Activated CD8-positive, alpha-beta T cell treated with anti-CD3 and anti-CD28 coated beads for 36 hours (primary cell): ENCODE measurements at regions of chr17 and their contacts with region 1.

Region 1: DNA sequence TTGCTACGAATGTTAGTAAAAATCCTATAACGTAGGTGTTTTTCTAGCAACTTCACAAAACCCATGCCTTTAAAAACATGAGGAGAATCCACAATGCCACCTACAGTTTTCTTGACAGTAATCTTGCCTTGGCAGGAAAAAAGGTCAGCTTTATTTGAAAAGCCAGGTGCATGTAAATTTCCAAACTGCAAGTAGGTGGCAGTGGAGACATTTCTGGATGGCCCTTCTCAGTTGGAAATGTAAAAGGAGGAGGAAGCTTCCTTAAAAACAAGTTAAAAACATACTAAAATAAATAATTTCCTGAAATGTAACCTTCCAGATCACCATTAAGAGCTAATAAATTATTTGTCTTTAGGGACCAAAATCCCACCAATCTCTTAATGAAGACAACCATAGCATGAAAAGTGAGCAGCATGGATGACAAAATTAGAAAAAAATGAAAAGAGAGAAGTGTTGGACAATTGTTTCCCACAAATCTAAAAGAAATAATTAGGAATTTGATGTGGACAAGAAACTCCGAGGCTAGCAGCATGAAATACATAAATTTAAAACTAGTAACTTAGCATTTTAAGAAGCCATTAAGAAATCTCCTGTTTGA is 152.2 kb downstream of the SNX11 start:
- DNase-seq: no peak
- ATAC-seq: no peak
- H3K4me3 Mint-ChIP-seq: no peak overlapping the region
- H3K27ac Mint-ChIP-seq: no peak overlapping the region
- H3K4me1 Mint-ChIP-seq: peaks cover 16% of the 10 kb centered on the region
- H3K27me3 Mint-ChIP-seq: no peaks in the 10 kb centered on the region
- CTCF ChIP-seq: peak; percentile 65

Region 2: DNA sequence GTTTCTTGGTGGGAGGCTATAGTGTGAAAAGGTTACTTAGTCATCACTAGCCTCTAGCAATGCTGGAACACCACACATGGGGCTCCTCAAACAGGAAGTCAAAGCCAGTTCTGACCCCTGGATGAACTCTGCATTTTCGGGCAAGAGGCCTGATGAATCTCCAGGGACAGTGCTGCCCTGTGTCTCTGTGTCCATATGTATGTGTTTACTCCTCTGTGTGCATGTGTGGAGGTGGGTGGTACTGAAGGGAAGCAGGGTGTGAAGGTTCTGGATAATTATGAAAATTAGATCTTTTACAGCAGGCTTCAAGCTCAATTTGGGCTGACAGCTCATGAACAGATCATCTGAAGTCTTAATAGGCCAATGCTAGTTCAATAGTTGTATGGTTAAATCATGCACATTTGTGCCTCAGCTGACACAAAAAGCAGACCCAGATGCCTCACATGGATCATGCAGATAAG is 18.6 kb before region 1 on chr17:
- CTCF ChIA-PET with region 1: interaction called, 12 read pairs
- POLR2A ChIA-PET with region 1: no interaction called
- intact Hi-C with region 1: no loop called
- DNase-seq: peak; percentile 65
- ATAC-seq: peak; percentile 94
- H3K4me3 Mint-ChIP-seq: no peak overlapping the region
- H3K27ac Mint-ChIP-seq: peak overlapping the region; percentile 40
- H3K4me1 Mint-ChIP-seq: peaks cover 75% of the 10 kb centered on the region
- H3K27me3 Mint-ChIP-seq: no peaks in the 10 kb centered on the region
- CTCF ChIP-seq: no peak

Region 3: DNA sequence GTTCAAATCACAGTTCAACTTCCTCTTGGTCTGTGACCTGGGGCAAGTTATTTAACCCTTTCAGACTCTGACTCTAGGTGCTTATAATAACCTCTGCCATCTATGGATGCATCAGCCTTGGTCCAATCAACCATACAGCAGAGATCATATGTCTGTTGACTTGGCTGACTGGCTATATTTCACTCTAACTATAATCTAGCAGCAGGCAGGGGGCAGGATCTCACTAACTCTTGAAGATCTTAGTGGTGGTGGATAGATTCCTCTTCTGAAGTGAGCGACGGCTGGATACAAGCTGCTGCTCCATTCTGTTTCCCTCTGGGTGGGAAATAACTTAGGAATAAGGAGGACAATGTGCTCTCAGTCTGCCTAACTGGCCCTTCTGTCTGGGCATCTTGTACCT is 23.6 kb after region 1 on chr17:
- CTCF ChIA-PET with region 1: interaction called, 34 read pairs
- POLR2A ChIA-PET with region 1: no interaction called
- intact Hi-C with region 1: no loop called
- DNase-seq: no peak
- ATAC-seq: no peak
- H3K4me3 Mint-ChIP-seq: no peak overlapping the region
- H3K27ac Mint-ChIP-seq: no peak overlapping the region
- H3K4me1 Mint-ChIP-seq: peaks cover 24% of the 10 kb centered on the region
- H3K27me3 Mint-ChIP-seq: no peaks in the 10 kb centered on the region
- CTCF ChIP-seq: no peak

Region 4: GRCh38 chr17:48335858-48336500 is 76.2 kb after region 1 on chr17:
- CTCF ChIA-PET with region 1: interaction called, 11 read pairs
- POLR2A ChIA-PET with region 1: interaction called, 4 read pairs
- intact Hi-C with region 1: no loop called
- DNase-seq: no peak
- ATAC-seq: peak; percentile 61
- H3K4me3 Mint-ChIP-seq: no peak overlapping the region
- H3K27ac Mint-ChIP-seq: no peak overlapping the region
- H3K4me1 Mint-ChIP-seq: peaks cover 13% of the 10 kb centered on the region
- H3K27me3 Mint-ChIP-seq: no peaks in the 10 kb centered on the region
- CTCF ChIP-seq: peak; percentile 81

Region 5: GRCh38 chr17:48618256-48618897 is 358.6 kb after region 1 on chr17:
- CTCF ChIA-PET with region 1: interaction called, 10 read pairs
- POLR2A ChIA-PET with region 1: no interaction called
- intact Hi-C with region 1: no loop called
- DNase-seq: peak; percentile 83
- ATAC-seq: peak; percentile 69
- H3K4me3 Mint-ChIP-seq: peak overlapping the region; percentile 46
- H3K27ac Mint-ChIP-seq: no peak overlapping the region
- H3K4me1 Mint-ChIP-seq: peaks cover 32% of the 10 kb centered on the region
- H3K27me3 Mint-ChIP-seq: peaks cover 86% of the 10 kb centered on the region
- CTCF ChIP-seq: peak; percentile 99